Activated CD4-positive, alpha-beta T cell treated with anti-CD3 and anti-CD28 coated beads, Interleukin-2, amount 10 ng/mL, durations not matched to agents 7 days and 5 days (primary cell): ENCODE measurements at regions of chr11 and their contacts with region 1.

Region 1: GRCh38 chr11:118342503-118343161 is at the start of gene CD3D:
- DNase-seq: peak; percentile 77
- H3K4me3 Mint-ChIP-seq: peak within 1 kb of the TSS; percentile 94
- H3K27ac Mint-ChIP-seq: peak within 1 kb of the TSS; percentile 98
- H3K4me1 Mint-ChIP-seq: peaks cover 65% of the 10 kb centered on the region
- H3K27me3 Mint-ChIP-seq: no peaks in the 10 kb centered on the region
- total RNA-seq, gene CD3D: 489 to 557 TPM

Region 2: GRCh38 chr11:118304568-118305248 is 37.9 kb before region 1 on chr11 and contains the start of gene CD3E:
- CTCF ChIA-PET with region 1: interaction called, 10 read pairs
- POLR2A ChIA-PET with region 1: interaction called, 17 read pairs
- DNase-seq: peak; percentile 84
- H3K4me3 Mint-ChIP-seq: peak within 1 kb of the TSS; percentile 99
- H3K27ac Mint-ChIP-seq: peak within 1 kb of the TSS; percentile 99
- H3K4me1 Mint-ChIP-seq: peaks cover 75% of the 10 kb centered on the region
- H3K27me3 Mint-ChIP-seq: no peaks in the 10 kb centered on the region
- total RNA-seq, gene CD3E: 680 to 841 TPM